Psoas muscle (tissue), 8 donors: ENCODE measurements at regions of chr6 and their contacts with region 1.

Region 1: DNA sequence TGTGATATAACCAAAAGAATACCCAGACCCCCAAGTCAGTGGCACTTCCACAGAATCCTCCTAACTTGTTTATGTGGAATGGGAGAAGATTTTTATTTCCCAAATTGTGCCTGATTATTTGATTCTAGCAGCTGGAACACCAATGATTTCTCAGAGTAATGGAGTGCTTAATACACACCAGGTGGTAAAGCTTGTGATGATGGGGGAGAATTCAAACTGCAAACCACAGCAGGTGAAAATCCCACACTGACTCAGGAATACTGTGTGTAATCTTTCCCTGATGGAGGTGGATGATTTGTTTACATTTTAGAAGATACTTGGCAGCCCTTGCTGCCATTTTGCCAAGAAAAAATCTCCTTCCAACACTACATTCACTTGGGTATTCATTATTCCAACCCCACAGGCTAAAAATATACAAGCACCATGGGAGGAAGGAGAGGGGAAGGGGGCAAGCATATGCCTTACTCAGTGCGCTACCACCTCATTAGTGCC is 212.7 kb upstream of the PLN start:
- DNase-seq: no peak
- ATAC-seq: peak in 2 of 4 donors; percentile 72 to 73
- H3K4me3 ChIP-seq: no peak overlapping the region
- H3K27ac ChIP-seq: peak overlapping the region; percentile 89
- H3K4me1 ChIP-seq: peaks cover 25% of the 10 kb centered on the region
- H3K27me3 ChIP-seq: no peaks in the 10 kb centered on the region
- CTCF ChIP-seq: no peak

Region 2: GRCh38 chr6:118298476-118299427 is 36.6 kb before region 1 on chr6:
- intact Hi-C with region 1: loop called in 1 of 2 experiments (anchors 5 kb)
- DNase-seq: no peak
- ATAC-seq: no peak
- H3K4me3 ChIP-seq: no peak overlapping the region
- H3K27ac ChIP-seq: no peak overlapping the region
- H3K4me1 ChIP-seq: peaks cover 23% of the 10 kb centered on the region
- H3K27me3 ChIP-seq: no peaks in the 10 kb centered on the region
- CTCF ChIP-seq: no peak

Region 3: DNA sequence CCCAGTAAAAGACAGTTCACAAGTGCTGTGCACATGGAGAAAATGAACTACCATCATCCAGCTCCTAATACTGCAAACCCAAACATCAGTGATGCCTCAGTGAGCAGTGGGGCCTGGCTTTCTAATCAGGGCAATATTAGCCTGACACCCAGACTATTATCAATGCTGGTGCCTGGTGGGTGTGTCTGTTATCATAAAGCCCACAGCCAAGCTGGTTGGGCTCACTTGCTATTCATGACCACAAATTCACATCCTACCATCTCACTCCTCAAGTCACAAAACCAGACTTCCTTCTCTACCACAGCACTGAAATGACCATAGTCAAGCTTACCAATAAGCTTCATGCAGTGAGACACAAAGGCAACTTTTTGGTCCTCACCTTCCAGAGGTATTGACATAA is 31.9 kb after region 1 on chr6:
- intact Hi-C with region 1: loop called (anchors 2 to 5 kb)
- DNase-seq: no peak
- ATAC-seq: no peak
- H3K4me3 ChIP-seq: no peak overlapping the region
- H3K27ac ChIP-seq: no peak overlapping the region
- H3K4me1 ChIP-seq: peaks cover 18% of the 10 kb centered on the region
- H3K27me3 ChIP-seq: no peaks in the 10 kb centered on the region
- CTCF ChIP-seq: no peak

Region 4: GRCh38 chr6:118372413-118372812 is 37.0 kb after region 1 on chr6:
- intact Hi-C with region 1: loop called (anchors 2 to 5 kb)
- DNase-seq: peak; percentile 19 to 77
- ATAC-seq: peak; percentile 96 to 99 (median 98)
- H3K4me3 ChIP-seq: no peak overlapping the region
- H3K27ac ChIP-seq: peak overlapping the region; percentile 89
- H3K4me1 ChIP-seq: peaks cover 26% of the 10 kb centered on the region
- H3K27me3 ChIP-seq: no peaks in the 10 kb centered on the region
- CTCF ChIP-seq: no peak